ENCODE measurements at regions of chr12 and their contacts with region 1.

Region 1: DNA sequence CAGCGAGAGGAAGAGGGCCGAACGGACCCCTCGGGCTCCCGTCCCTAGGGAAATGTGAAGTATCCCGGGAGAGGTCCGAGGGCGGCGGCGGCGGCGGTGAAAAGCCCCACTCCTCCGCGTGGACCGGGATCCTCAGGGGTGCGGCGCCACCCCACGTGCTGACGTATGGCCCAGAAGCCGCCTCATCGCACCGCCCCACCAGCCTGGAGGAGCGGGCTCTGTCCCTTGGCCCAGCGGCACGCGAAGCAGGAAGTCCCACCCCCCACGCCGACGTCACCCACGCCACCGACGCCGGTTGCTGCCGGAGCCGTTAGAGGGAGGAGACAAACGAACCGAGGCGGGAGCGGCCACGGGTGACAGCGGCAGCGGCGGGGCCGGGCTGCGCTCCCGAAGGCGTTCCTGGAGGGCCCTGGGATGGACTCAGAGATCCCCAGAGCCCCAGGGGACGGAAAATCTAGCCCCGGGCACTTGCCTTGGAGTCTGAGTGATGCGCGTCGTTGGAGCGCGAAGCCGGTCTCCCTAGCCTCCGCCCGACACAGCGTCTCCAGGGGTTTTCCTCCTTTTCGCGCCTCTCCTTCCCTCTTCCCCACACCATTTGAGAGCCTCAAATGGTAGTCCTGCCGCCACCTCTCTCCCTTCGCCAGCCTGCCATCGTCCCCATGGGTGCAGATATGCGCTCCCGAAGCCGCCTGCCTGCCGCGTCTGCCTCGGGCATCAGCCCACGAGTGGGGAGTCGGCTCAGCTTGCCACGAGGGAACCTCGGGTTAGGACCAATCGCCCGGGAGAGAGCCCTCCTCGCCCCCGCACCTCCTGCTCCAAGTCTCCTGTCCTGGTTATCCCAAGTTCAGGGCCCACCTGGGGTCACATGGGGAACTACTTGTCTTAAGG is at the start of gene CEP83:
- DNase-seq: peak; percentile 98
- H3K4me3 Mint-ChIP-seq: peak within 1 kb of the TSS; percentile 93
- H3K27ac Mint-ChIP-seq: peak within 1 kb of the TSS; percentile 95
- H3K4me1 Mint-ChIP-seq: peaks cover 28% of the 10 kb centered on the region
- H3K27me3 Mint-ChIP-seq: peaks cover 6% of the 10 kb centered on the region
- total RNA-seq, gene CEP83: 37.7 and 40.0 TPM in 2 replicates

Region 2: GRCh38 chr12:94149119-94149780 is 310.7 kb before region 1 on chr12:
- intact Hi-C with region 1: loop called (anchors 1 kb)
- DNase-seq: peak; percentile 32
- H3K4me3 Mint-ChIP-seq: peak overlapping the region; percentile 92
- H3K27ac Mint-ChIP-seq: peak overlapping the region; percentile 55
- H3K4me1 Mint-ChIP-seq: peaks cover 44% of the 10 kb centered on the region
- H3K27me3 Mint-ChIP-seq: peaks cover 24% of the 10 kb centered on the region

Region 3: GRCh38 chr12:94326727-94327126 is 133.2 kb before region 1 on chr12:
- intact Hi-C with region 1: loop called (anchors 2 kb)
- DNase-seq: no peak
- H3K4me3 Mint-ChIP-seq: no peak overlapping the region
- H3K27ac Mint-ChIP-seq: peak overlapping the region; percentile 51
- H3K4me1 Mint-ChIP-seq: peaks cover 29% of the 10 kb centered on the region
- H3K27me3 Mint-ChIP-seq: no peaks in the 10 kb centered on the region

Region 4: DNA sequence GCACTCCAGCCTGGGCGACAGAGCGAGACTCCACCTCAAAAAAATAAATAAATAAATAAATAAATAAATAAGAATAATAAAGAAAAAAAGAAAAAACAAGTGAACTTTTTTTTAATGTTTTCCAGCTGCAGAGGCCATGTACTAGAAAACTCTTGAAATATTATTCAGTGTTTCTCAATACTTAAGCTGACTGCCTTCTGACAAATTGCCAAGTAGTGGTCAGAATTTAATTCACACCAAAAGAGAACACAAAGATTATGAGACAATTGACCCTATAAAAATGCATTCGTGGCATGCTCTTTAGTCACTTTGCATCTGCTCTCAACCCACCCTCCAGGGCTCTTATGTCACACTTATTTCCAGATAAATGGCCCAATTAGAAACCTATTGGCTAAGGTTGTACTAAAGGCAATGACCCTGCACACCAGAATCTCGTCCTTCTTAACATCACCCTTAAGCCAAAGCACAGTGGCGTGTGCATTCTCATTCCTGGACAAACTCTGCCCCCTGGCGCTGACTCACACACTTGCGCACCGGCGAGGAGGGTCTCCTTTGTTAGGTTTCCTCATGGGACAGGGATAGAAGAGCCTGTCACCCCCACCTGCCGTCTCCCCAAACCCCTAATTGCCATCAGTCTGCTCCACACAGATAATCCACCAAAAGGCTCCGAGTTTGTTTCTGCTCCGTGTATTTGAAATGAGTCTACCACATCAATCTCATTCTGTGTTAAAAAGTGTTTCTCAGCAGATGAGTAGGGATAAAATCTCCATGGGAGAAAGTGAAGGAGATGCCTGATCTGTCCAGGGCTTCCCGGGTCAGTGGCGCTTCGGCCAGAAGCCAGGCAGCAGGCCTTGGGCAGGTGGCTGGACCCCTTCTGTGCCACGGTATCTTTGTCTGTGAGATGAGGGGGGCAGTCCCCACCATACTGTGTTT is 72.8 kb after region 1 on chr12:
- intact Hi-C with region 1: loop called (anchors 1 kb)
- DNase-seq: peak; percentile 59
- H3K4me3 Mint-ChIP-seq: no peak overlapping the region
- H3K27ac Mint-ChIP-seq: no peak overlapping the region
- H3K4me1 Mint-ChIP-seq: peaks cover 17% of the 10 kb centered on the region
- H3K27me3 Mint-ChIP-seq: peaks cover 10% of the 10 kb centered on the region

Region 5: GRCh38 chr12:95003213-95003920 is 543.4 kb after region 1 on chr12 and contains the start of gene NDUFA12:
- intact Hi-C with region 1: loop called (anchors 2 kb)
- DNase-seq: peak; percentile 94
- H3K4me3 Mint-ChIP-seq: peak within 1 kb of the TSS; percentile 95
- H3K27ac Mint-ChIP-seq: peak within 1 kb of the TSS; percentile 93
- H3K4me1 Mint-ChIP-seq: peaks cover 30% of the 10 kb centered on the region
- H3K27me3 Mint-ChIP-seq: no peaks in the 10 kb centered on the region
- total RNA-seq, gene NDUFA12: 113 TPM in 2 replicates